Activated CD4-positive, alpha-beta memory T cell treated with anti-CD3 and anti-CD28 coated beads for 36 hours (primary cell): ENCODE measurements at regions of chr11 and their contacts with region 1.

Region 1: GRCh38 chr11:13668102-13668956 is at the start of gene FAR1:
- DNase-seq: peak; percentile 98
- H3K4me3 Mint-ChIP-seq: peak within 1 kb of the TSS; percentile 93
- H3K27ac Mint-ChIP-seq: peak within 1 kb of the TSS; percentile 91
- H3K4me1 Mint-ChIP-seq: peaks cover 40% of the 10 kb centered on the region
- H3K27me3 Mint-ChIP-seq: no peaks in the 10 kb centered on the region
- total RNA-seq, gene FAR1: 39.5 to 41.3 TPM

Region 2: DNA sequence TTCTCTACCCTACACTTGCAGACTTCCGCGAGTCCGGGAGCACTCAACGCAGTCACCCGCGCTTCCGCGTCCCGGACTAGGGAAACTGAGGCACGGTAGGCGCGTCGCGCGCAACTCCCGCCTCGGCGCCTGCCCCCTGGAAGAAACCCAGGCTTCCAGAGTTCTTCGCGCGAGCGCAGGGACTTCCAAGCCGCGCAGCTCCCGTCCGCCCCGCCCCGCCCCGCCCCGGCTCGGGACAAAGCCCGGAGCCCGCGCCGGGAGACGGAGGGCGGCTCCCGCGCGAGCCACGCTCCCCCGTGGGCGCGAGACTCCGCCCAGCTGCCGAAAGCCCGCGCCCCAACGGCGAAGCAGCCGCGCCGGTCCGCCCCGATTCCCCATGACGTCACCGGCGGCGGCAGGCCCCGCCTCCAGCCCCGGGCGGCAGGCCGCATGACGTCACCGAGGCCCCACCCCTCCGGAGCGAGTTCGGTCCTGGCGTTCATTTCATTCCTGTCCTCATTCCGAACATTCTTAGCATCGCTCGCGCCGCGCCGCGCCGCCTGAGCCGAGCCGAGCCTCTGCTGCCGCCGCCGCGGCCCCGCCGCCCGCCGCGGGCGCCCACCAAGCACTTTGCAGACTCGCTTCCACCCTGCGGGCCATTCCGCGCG is 994.3 kb before region 1 on chr11 and contains the start of gene TEAD1:
- CTCF ChIA-PET with region 1: no interaction called
- POLR2A ChIA-PET with region 1: no interaction called
- intact Hi-C with region 1: loop called (anchors 5 kb)
- DNase-seq: peak; percentile 91
- H3K4me3 Mint-ChIP-seq: peak within 1 kb of the TSS; percentile 76
- H3K27ac Mint-ChIP-seq: no peak within 1 kb of the TSS
- H3K4me1 Mint-ChIP-seq: peaks cover 8% of the 10 kb centered on the region
- H3K27me3 Mint-ChIP-seq: peaks cover 61% of the 10 kb centered on the region
- total RNA-seq, gene TEAD1: 1.0 to 1.5 TPM

Region 3: DNA sequence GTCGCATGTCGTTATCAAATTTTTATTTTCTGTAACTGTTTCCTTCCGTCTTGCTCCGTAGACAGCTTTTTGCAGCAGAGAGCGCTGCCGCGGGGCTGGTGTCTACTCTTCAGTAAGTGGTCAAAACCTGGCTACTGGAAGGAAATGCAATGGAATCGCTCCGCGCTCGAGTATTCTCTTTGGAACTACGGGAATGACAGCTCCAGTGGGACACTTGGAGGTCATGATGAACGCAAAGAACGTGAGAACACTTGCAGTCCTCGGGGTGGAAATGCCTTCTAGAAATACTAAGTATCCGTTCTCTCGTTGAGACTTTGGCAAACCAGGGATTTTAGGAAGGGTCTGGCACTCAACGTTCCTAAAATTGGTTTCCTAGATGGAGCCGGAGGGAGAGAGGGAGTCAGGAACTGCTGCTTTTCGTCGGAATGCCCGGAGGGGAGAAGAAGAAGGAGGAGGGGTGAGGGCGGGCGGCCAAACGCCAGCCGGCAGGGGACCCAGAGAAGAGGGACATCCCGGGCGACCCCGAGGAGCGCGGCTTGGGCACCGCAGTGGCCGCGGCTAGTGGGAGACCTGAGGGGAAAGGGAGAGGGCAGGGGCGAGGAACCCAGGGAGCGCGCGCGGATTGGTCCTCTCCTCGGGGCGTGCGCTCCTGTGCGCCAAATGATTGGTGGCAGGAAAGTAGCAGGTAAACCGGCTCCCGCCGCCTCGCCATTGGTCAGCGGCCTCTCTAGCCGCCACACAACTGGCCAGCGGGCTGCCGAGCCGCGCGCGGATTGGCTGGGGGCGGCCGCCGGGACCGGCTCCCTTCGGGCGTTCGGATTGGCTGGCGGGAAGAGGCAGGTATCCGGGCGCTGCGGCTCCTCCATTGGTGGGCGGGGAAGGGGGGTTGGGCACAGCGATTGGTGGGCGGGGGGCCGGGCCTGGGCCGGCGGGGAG is 391.2 kb before region 1 on chr11:
- CTCF ChIA-PET with region 1: no interaction called
- POLR2A ChIA-PET with region 1: no interaction called
- intact Hi-C with region 1: loop called (anchors 5 kb)
- DNase-seq: peak; percentile 98
- H3K4me3 Mint-ChIP-seq: peak overlapping the region; percentile 95
- H3K27ac Mint-ChIP-seq: peak overlapping the region; percentile 78
- H3K4me1 Mint-ChIP-seq: peaks cover 44% of the 10 kb centered on the region
- H3K27me3 Mint-ChIP-seq: peaks cover 7% of the 10 kb centered on the region

Region 4: GRCh38 chr11:13462901-13463778 is 205.2 kb before region 1 on chr11 and contains the start of gene BTBD10:
- CTCF ChIA-PET with region 1: no interaction called
- POLR2A ChIA-PET with region 1: interaction called, 7 read pairs
- intact Hi-C with region 1: loop called (anchors 1 kb)
- DNase-seq: peak; percentile 95
- H3K4me3 Mint-ChIP-seq: peak within 1 kb of the TSS; percentile 98
- H3K27ac Mint-ChIP-seq: peak within 1 kb of the TSS; percentile 95
- H3K4me1 Mint-ChIP-seq: peaks cover 35% of the 10 kb centered on the region
- H3K27me3 Mint-ChIP-seq: no peaks in the 10 kb centered on the region
- total RNA-seq, gene BTBD10: 22.3 to 24.3 TPM

Region 5: DNA sequence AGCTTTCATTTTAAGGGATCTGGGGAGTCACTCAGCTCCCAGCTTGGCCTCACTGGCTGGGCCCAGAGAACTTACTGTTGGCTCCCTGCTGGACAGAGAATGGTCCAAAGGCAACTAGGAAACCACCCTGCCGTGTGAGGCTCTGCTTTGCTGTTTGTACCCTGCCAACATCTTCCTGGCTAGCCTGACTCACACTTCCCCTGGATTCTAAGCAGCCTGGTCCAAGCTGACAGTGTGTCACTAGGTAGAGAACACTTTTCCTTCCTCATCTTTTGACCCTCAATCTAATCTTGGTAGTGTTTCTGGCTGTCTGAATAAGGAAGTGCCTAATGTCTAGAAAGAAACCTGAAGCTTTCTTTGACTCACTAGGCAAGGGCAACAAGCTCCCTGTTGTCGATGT is 76.8 kb after region 1 on chr11:
- CTCF ChIA-PET with region 1: no interaction called
- POLR2A ChIA-PET with region 1: no interaction called
- intact Hi-C with region 1: no loop called
- DNase-seq: no peak
- H3K4me3 Mint-ChIP-seq: no peak overlapping the region
- H3K27ac Mint-ChIP-seq: no peak overlapping the region
- H3K4me1 Mint-ChIP-seq: no peaks in the 10 kb centered on the region
- H3K27me3 Mint-ChIP-seq: peaks cover 22% of the 10 kb centered on the region

Region 6: GRCh38 chr11:13868710-13869397 is 200.5 kb after region 1 on chr11:
- CTCF ChIA-PET with region 1: no interaction called
- POLR2A ChIA-PET with region 1: no interaction called
- intact Hi-C with region 1: loop called (anchors 2 kb)
- DNase-seq: peak; percentile 18
- H3K4me3 Mint-ChIP-seq: peak overlapping the region; percentile 17
- H3K27ac Mint-ChIP-seq: peak overlapping the region; percentile 85
- H3K4me1 Mint-ChIP-seq: peaks cover 38% of the 10 kb centered on the region
- H3K27me3 Mint-ChIP-seq: no peaks in the 10 kb centered on the region

Region 7: GRCh38 chr11:13962562-13963168 is 294.3 kb after region 1 on chr11 and contains the start of gene SPON1:
- CTCF ChIA-PET with region 1: no interaction called
- POLR2A ChIA-PET with region 1: no interaction called
- intact Hi-C with region 1: loop called (anchors 10 kb)
- DNase-seq: peak; percentile 64
- H3K4me3 Mint-ChIP-seq: peak within 1 kb of the TSS; percentile 65
- H3K27ac Mint-ChIP-seq: no peak within 1 kb of the TSS
- H3K4me1 Mint-ChIP-seq: peaks cover 10% of the 10 kb centered on the region
- H3K27me3 Mint-ChIP-seq: peaks cover 32% of the 10 kb centered on the region
- total RNA-seq, gene SPON1: 0.22 to 0.31 TPM